ENCODE measurements at regions of chr2 and their contacts with region 1.

Region 1: GRCh38 chr2:97995734-97996624 is at the start of gene TMEM131:
- DNase-seq: peak; percentile 74
- ATAC-seq: peak; percentile 85
- H3K4me3 ChIP-seq: peak within 1 kb of the TSS; percentile 83
- H3K27ac ChIP-seq: peak within 1 kb of the TSS; percentile 94
- H3K4me1 ChIP-seq: peaks cover 9% of the 10 kb centered on the region
- H3K27me3 ChIP-seq: no peaks in the 10 kb centered on the region
- CTCF ChIP-seq: no peak
- EP300 ChIP-seq: peak in 1 of 2 experiments; percentile 5; a peak in 1 of 4 replicates
- POLR2A ChIP-seq: peak; percentile 88
- RAD21 ChIP-seq: no peak
- polyA plus RNA-seq, gene TMEM131: 6.0 to 8.1 TPM

Region 2: GRCh38 chr2:97834610-97835009 is 161.4 kb before region 1 on chr2:
- CTCF ChIA-PET with region 1: no interaction called
- POLR2A ChIA-PET with region 1: no interaction called
- RAD21 ChIA-PET with region 1: no interaction called
- SMC1A ChIA-PET with region 1: interaction called, 3 read pairs
- in situ Hi-C with region 1: no loop called
- intact Hi-C with region 1: loop called (anchors 5 kb)
- DNase-seq: no peak
- ATAC-seq: peak; percentile 41; the same call in 2 of the 3 replicates
- H3K4me3 ChIP-seq: no peak overlapping the region
- H3K27ac ChIP-seq: no peak overlapping the region
- H3K4me1 ChIP-seq: no peaks in the 10 kb centered on the region
- H3K27me3 ChIP-seq: no peaks in the 10 kb centered on the region
- CTCF ChIP-seq: no peak
- EP300 ChIP-seq: no peak
- POLR2A ChIP-seq: no peak
- RAD21 ChIP-seq: no peak

Region 3: GRCh38 chr2:97911206-97911921 is 84.6 kb before region 1 on chr2:
- CTCF ChIA-PET with region 1: interaction called, 5 read pairs
- POLR2A ChIA-PET with region 1: no interaction called
- RAD21 ChIA-PET with region 1: interaction called, 6 read pairs
- SMC1A ChIA-PET with region 1: interaction called, 16 read pairs
- in situ Hi-C with region 1: no loop called
- intact Hi-C with region 1: loop called (anchors 1 kb)
- DNase-seq: peak; percentile 84
- ATAC-seq: peak; percentile 74
- H3K4me3 ChIP-seq: no peak overlapping the region
- H3K27ac ChIP-seq: peak overlapping the region; percentile 64
- H3K4me1 ChIP-seq: peaks cover 60% of the 10 kb centered on the region
- H3K27me3 ChIP-seq: no peaks in the 10 kb centered on the region
- CTCF ChIP-seq: no peak
- EP300 ChIP-seq: peak in 1 of 2 experiments; percentile 86; a peak in 3 of 4 replicates
- POLR2A ChIP-seq: no peak
- RAD21 ChIP-seq: peak; percentile 15; the same call in 1 of the 2 replicates

Region 4: GRCh38 chr2:97950329-97951154 is 45.4 kb before region 1 on chr2:
- CTCF ChIA-PET with region 1: no interaction called
- POLR2A ChIA-PET with region 1: interaction called, 3 read pairs
- RAD21 ChIA-PET with region 1: interaction called, 7 read pairs
- SMC1A ChIA-PET with region 1: interaction called, 17 read pairs
- in situ Hi-C with region 1: no loop called
- intact Hi-C with region 1: no loop called
- DNase-seq: no peak
- ATAC-seq: no peak
- H3K4me3 ChIP-seq: no peak overlapping the region
- H3K27ac ChIP-seq: no peak overlapping the region
- H3K4me1 ChIP-seq: peaks cover 38% of the 10 kb centered on the region
- H3K27me3 ChIP-seq: no peaks in the 10 kb centered on the region
- CTCF ChIP-seq: no peak
- EP300 ChIP-seq: no peak
- POLR2A ChIP-seq: no peak
- RAD21 ChIP-seq: no peak

Region 5: GRCh38 chr2:97966518-97967215 is 29.3 kb before region 1 on chr2:
- CTCF ChIA-PET with region 1: interaction called, 3 read pairs
- POLR2A ChIA-PET with region 1: interaction called, 3 read pairs
- RAD21 ChIA-PET with region 1: interaction called, 18 read pairs
- SMC1A ChIA-PET with region 1: interaction called, 28 read pairs
- in situ Hi-C with region 1: no loop called
- intact Hi-C with region 1: loop called (anchors 2 kb)
- DNase-seq: no peak
- ATAC-seq: peak; percentile 74
- H3K4me3 ChIP-seq: no peak overlapping the region
- H3K27ac ChIP-seq: no peak overlapping the region
- H3K4me1 ChIP-seq: peaks cover 33% of the 10 kb centered on the region
- H3K27me3 ChIP-seq: no peaks in the 10 kb centered on the region
- CTCF ChIP-seq: no peak
- EP300 ChIP-seq: peak; percentile 63 to 75; a peak in 2 of 4 replicates
- POLR2A ChIP-seq: no peak
- RAD21 ChIP-seq: no peak

Region 6: GRCh38 chr2:98026927-98027522 is 31.0 kb after region 1 on chr2:
- CTCF ChIA-PET with region 1: interaction called, 6 read pairs
- POLR2A ChIA-PET with region 1: interaction called, 3 read pairs
- RAD21 ChIA-PET with region 1: interaction called, 9 read pairs
- SMC1A ChIA-PET with region 1: interaction called, 10 read pairs
- in situ Hi-C with region 1: no loop called
- intact Hi-C with region 1: loop called (anchors 1 kb)
- DNase-seq: peak; percentile 98
- ATAC-seq: peak; percentile 93
- H3K4me3 ChIP-seq: peak overlapping the region; percentile 53
- H3K27ac ChIP-seq: peak overlapping the region; percentile 80
- H3K4me1 ChIP-seq: peaks cover 35% of the 10 kb centered on the region
- H3K27me3 ChIP-seq: no peaks in the 10 kb centered on the region
- CTCF ChIP-seq: no peak
- EP300 ChIP-seq: peak; percentile 87 to 93
- POLR2A ChIP-seq: no peak
- RAD21 ChIP-seq: no peak

Region 7: GRCh38 chr2:98149333-98149697 is 153.3 kb after region 1 on chr2:
- CTCF ChIA-PET with region 1: no interaction called
- POLR2A ChIA-PET with region 1: no interaction called
- RAD21 ChIA-PET with region 1: no interaction called
- SMC1A ChIA-PET with region 1: no interaction called
- in situ Hi-C with region 1: no loop called
- intact Hi-C with region 1: no loop called
- DNase-seq: no peak
- ATAC-seq: peak; percentile 58
- H3K4me3 ChIP-seq: no peak overlapping the region
- H3K27ac ChIP-seq: no peak overlapping the region
- H3K4me1 ChIP-seq: no peaks in the 10 kb centered on the region
- H3K27me3 ChIP-seq: no peaks in the 10 kb centered on the region; a peak in 1 of 4 replicates
- CTCF ChIP-seq: no peak
- EP300 ChIP-seq: no peak
- POLR2A ChIP-seq: no peak
- RAD21 ChIP-seq: no peak